ENCODE measurements at regions of chr14 and their contacts with region 1.

Region 1: GRCh38 chr14:106062502-106063272 is 536.3 kb downstream of the TMEM121 start:
- DNase-seq: no peak
- ATAC-seq: peak; percentile 52
- H3K4me3 Mint-ChIP-seq: peak overlapping the region; percentile 73
- H3K27ac Mint-ChIP-seq: no peak overlapping the region
- H3K4me1 Mint-ChIP-seq: peaks cover 17% of the 10 kb centered on the region
- H3K27me3 Mint-ChIP-seq: peaks cover 3% of the 10 kb centered on the region
- CTCF ChIP-seq: no peak

Region 2: GRCh38 chr14:105430535-105430934 is 632.2 kb before region 1 on chr14:
- CTCF ChIA-PET with region 1: no interaction called
- POLR2A ChIA-PET with region 1: no interaction called
- intact Hi-C with region 1: no loop called
- DNase-seq: no peak
- ATAC-seq: no peak
- H3K4me3 Mint-ChIP-seq: no peak overlapping the region
- H3K27ac Mint-ChIP-seq: no peak overlapping the region
- H3K4me1 Mint-ChIP-seq: peaks cover 22% of the 10 kb centered on the region
- H3K27me3 Mint-ChIP-seq: no peaks in the 10 kb centered on the region
- CTCF ChIP-seq: no peak

Region 3: DNA sequence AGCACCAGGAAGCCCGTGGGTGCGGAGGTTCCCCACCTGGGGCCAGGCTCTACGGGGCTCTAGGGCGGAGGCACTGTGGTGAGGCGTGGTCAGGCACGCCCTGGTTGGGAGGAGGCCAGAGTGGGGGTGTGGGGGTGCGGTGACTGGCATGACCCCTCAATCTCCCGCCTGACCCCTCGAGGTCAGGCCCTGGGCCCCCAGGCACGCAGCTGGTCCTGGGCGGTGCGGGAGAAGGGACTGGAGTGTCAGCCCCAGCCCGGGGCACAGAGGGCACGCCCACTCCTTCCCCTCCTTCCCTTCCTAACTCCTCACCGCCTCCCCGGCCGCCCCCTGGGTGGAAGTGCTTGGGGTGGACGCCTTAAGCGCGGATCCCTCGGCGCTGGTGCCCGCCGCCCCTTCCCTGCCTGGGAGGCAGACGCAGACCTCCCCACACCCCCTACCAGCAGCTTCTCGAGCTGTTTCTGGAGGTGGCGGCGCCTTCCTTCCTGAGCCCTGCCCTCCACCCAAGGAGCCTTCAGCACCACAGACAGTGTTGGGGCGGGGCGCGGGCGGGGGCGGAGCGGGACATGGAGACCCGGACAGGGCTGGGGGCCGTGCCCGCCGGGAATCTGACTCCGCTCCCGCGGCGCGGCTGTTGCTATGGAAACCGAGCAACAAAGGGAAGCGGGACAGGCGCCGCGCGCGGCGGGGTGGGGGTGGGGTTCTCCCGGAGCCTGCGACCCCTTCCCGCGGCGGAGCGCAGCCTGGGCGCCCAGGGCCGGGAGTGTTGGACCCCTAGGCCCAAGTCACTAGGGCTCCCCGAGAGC is 588.8 kb before region 1 on chr14:
- CTCF ChIA-PET with region 1: no interaction called
- POLR2A ChIA-PET with region 1: no interaction called
- intact Hi-C with region 1: no loop called
- DNase-seq: peak; percentile 58
- ATAC-seq: peak; percentile 61
- H3K4me3 Mint-ChIP-seq: peak overlapping the region; percentile 71
- H3K27ac Mint-ChIP-seq: no peak overlapping the region
- H3K4me1 Mint-ChIP-seq: peaks cover 32% of the 10 kb centered on the region
- H3K27me3 Mint-ChIP-seq: peaks cover 3% of the 10 kb centered on the region
- CTCF ChIP-seq: no peak

Region 4: DNA sequence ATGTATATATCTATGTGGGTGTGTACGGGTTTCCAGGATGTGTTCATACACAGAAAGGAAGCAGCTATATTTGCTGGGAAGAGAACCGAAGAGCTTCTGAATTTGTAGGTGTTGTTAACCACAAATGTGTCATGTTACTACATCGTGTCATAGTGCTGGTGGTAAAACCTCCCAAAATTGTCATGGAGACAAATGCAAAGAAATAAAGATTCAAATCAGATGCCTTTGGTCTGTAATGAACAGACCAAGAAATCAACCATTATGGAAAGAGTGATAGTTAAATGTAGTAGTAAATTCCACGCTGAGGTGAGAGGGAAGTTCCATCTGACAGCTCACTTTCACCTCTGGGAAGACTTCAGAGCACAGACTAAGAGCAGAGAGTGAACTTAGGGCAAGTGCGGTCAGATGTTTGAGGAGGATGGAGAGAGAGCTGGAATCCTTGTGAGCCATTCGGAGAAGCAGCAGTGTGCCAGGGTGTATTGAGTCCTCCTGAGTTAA is 48.8 kb before region 1 on chr14:
- CTCF ChIA-PET with region 1: no interaction called
- POLR2A ChIA-PET with region 1: no interaction called
- intact Hi-C with region 1: loop called (anchors 10 kb)
- DNase-seq: no peak
- ATAC-seq: no peak
- H3K4me3 Mint-ChIP-seq: no peak overlapping the region
- H3K27ac Mint-ChIP-seq: no peak overlapping the region
- H3K4me1 Mint-ChIP-seq: peaks cover 2% of the 10 kb centered on the region
- H3K27me3 Mint-ChIP-seq: no peaks in the 10 kb centered on the region
- CTCF ChIP-seq: no peak

Region 5: DNA sequence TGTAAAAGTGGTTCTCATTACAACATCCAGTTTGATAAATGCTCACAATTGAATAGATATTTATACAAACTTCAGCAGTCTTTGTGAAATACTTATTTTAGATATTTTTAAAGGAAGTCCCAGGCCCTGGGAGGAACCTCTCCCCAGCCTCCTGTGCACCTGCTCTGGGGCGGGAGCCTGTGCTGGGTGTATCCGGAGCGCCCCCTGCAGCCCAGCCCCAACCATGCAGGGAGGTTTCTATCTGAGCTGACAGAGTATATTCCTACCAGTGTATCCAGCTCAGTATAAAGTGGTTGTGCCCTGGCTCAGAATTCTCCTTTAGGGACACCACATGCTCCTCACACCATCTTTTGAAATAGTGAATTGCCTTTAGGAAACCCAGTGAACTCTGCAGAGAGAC is 315.5 kb after region 1 on chr14:
- CTCF ChIA-PET with region 1: no interaction called
- POLR2A ChIA-PET with region 1: no interaction called
- intact Hi-C with region 1: no loop called
- DNase-seq: no peak
- ATAC-seq: peak; percentile 38
- H3K4me3 Mint-ChIP-seq: no peak overlapping the region
- H3K27ac Mint-ChIP-seq: no peak overlapping the region
- H3K4me1 Mint-ChIP-seq: peaks cover 16% of the 10 kb centered on the region
- H3K27me3 Mint-ChIP-seq: peaks cover 9% of the 10 kb centered on the region
- CTCF ChIP-seq: no peak

Measured in activated B cell treated with CpG ODN at 0.5 μM for 24 hours (primary cell).